ENCODE measurements at regions of chr16 and their contacts with region 1.

Region 1: GRCh38 chr16:21584817-21585216 is 14.6 kb upstream of the METTL9 start:
- DNase-seq: no peak
- ATAC-seq: no peak

Region 2: DNA sequence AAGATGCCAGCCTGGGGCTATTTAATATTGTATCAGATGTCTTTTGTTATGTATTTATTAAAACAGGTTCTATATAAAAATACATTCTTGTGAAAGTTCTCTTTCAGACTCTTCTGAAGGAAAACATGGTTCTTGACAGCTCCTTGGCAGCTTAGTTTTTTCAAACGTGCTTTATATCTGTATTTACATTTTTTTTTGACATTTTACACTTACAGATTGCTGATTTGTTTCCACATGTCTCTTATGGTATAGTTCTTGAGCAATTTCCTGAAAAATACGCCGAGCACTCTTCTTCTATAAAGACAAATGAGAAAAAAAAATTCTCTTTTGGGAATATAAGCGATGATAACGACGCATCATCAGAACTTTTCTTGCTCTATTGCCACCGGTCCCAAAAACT is 58.0 kb after region 1 on chr16:
- intact Hi-C with region 1: loop called (anchors 2 kb)
- DNase-seq: no peak
- ATAC-seq: no peak

Region 3: GRCh38 chr16:21708533-21709115 is 123.8 kb after region 1 on chr16:
- intact Hi-C with region 1: loop called (anchors 5 kb)
- DNase-seq: peak; percentile 66
- ATAC-seq: peak; percentile 51

Region 4: GRCh38 chr16:21727344-21727743 is 142.5 kb after region 1 on chr16:
- intact Hi-C with region 1: no loop called
- DNase-seq: no peak
- ATAC-seq: no peak